Esophagus muscularis mucosa (tissue), 4 donors: ENCODE measurements at regions of chr4 and their contacts with region 1.

Region 1: GRCh38 chr4:9859810-9860209 is 78.4 kb downstream of the DRD5 start:
- DNase-seq: no peak
- H3K4me3 ChIP-seq: no peak overlapping the region
- H3K27ac ChIP-seq: no peak overlapping the region
- H3K4me1 ChIP-seq: no peaks in the 10 kb centered on the region
- H3K27me3 ChIP-seq: no peaks in the 10 kb centered on the region
- CTCF ChIP-seq: no peak
- EP300 ChIP-seq: no peak
- POLR2A ChIP-seq: no peak

Region 2: GRCh38 chr4:9880406-9881197 is 20.8 kb after region 1 on chr4:
- intact Hi-C with region 1: loop called (anchors 1 kb)
- DNase-seq: no peak
- H3K4me3 ChIP-seq: no peak overlapping the region
- H3K27ac ChIP-seq: no peak overlapping the region
- H3K4me1 ChIP-seq: peaks cover 0 to 3% (median 2%) of the 10 kb centered on the region in 4 donors
- H3K27me3 ChIP-seq: no peaks in the 10 kb centered on the region
- CTCF ChIP-seq: no peak
- EP300 ChIP-seq: no peak
- POLR2A ChIP-seq: no peak